ENCODE measurements at regions of chr3 and their contacts with region 1.

Region 1: GRCh38 chr3:24494618-24495325 is at the start of gene THRB:
- DNase-seq: peak; percentile 69
- H3K4me3 ChIP-seq: peak within 1 kb of the TSS; percentile 59 to 70
- H3K27ac ChIP-seq: peak within 1 kb of the TSS; percentile 93 to 96
- H3K4me1 ChIP-seq: no peaks in the 10 kb centered on the region
- H3K27me3 ChIP-seq: no peaks in the 10 kb centered on the region
- CTCF ChIP-seq: peak in 1 of 4 experiments; percentile 45
- POLR2A ChIP-seq: peak; percentile 67
- total RNA-seq, gene THRB: 13.0 to 39.6 TPM

Region 2: DNA sequence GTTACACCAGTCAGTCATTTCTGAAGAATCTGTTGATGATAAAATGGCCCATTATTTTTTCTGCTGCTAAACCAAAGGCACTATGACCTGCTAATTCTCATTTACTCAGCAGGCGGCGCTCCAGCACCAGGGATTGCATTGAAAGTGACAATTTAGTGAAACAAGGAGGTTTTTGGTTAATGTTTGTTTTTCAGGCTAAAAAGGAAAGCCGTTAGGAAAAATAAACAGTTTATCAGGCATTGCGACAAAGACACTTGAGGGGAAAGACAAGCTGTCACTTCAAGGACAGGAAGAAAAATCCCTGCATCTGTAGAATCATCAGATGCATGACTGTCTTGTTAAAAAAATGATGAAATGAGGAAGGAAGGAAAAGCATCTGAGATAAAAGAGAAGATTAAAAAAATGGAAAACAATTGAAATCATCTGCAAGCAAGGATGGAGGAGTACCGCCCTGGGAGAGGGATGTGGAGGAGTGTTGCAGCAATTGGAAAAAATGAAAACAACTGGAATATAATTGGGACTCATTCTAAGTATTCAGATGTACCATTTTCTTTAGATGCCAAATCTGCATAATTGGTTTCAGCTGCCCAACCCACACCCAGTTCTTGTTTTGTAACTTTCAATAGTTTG is 495.6 kb before region 1 on chr3:
- intact Hi-C with region 1: loop called (anchors 5 kb)
- DNase-seq: peak; percentile 58
- H3K4me3 ChIP-seq: no peak overlapping the region
- H3K27ac ChIP-seq: no peak overlapping the region
- H3K4me1 ChIP-seq: no peaks in the 10 kb centered on the region
- H3K27me3 ChIP-seq: no peaks in the 10 kb centered on the region
- CTCF ChIP-seq: peak; percentile 59 to 94 (median 86)
- POLR2A ChIP-seq: no peak

Region 3: DNA sequence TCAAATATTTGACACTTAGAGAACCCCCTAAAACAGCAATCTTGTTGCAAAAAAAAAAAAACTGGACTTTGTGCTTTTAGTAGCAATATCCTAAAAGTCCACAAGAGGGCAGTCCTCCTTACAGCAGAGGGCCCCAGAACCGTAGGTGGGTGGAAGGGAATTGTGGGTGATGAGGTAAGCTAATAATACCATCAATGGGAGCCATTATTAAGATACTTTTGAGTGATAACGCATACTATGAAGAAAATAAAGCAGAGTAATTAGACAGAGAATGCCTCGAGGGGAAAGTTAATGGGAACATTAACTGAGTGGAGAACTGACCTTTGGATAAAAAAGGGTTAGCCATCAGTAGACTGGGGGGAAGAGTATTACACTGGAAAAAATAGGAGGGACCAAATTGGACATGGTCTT is 230.0 kb before region 1 on chr3:
- intact Hi-C with region 1: loop called (anchors 10 kb)
- DNase-seq: no peak
- H3K4me3 ChIP-seq: no peak overlapping the region
- H3K27ac ChIP-seq: no peak overlapping the region
- H3K4me1 ChIP-seq: no peaks in the 10 kb centered on the region
- H3K27me3 ChIP-seq: no peaks in the 10 kb centered on the region
- CTCF ChIP-seq: peak; percentile 53 to 66 (median 60)
- POLR2A ChIP-seq: no peak

Region 4: GRCh38 chr3:24365194-24365612 is 129.6 kb before region 1 on chr3:
- intact Hi-C with region 1: loop called (anchors 10 kb)
- DNase-seq: peak; percentile 89
- H3K4me3 ChIP-seq: no peak overlapping the region
- H3K27ac ChIP-seq: no peak overlapping the region
- H3K4me1 ChIP-seq: no peaks in the 10 kb centered on the region
- H3K27me3 ChIP-seq: no peaks in the 10 kb centered on the region
- CTCF ChIP-seq: peak in 3 of 4 experiments; percentile 33 to 37 (median 36)
- POLR2A ChIP-seq: no peak

Measured in prostate gland (tissue), 2 donors.